Activated CD4-positive, alpha-beta memory T cell treated with anti-CD3 and anti-CD28 coated beads for 36 hours (primary cell): ENCODE measurements at regions of chr5 and their contacts with region 1.

Region 1: DNA sequence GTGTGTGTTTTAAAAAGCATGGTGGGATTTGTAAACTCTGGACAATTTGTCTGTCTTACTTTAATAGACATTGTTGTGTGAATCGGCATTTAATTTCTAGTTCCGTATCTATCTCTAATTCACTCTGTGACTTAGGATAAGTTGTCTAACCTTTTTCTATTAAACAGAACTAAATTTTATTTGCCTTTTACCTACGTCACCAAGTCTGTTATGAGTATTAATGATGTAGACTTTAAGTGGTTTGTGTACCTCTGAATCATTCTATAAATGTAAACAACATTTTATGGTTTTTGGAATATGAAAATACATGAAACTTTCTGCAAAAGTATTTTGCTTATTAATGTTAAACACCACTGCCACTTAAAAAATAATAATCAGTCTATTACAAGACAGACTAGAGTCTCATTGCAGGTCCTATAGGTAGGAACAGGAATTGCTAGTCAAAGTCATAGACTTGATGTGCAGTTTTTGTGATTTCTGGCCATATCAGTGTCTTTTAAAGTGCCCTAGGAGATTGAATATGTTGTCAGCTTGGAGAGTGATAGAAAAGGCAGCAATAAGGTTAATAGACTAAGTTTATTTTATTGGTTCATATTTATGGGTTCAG is 5.6 kb downstream of the RBM27 start:
- DNase-seq: no peak
- H3K4me3 Mint-ChIP-seq: no peak overlapping the region
- H3K27ac Mint-ChIP-seq: no peak overlapping the region
- H3K4me1 Mint-ChIP-seq: peaks cover 43% of the 10 kb centered on the region
- H3K27me3 Mint-ChIP-seq: no peaks in the 10 kb centered on the region

Region 2: GRCh38 chr5:146173597-146173996 is 35.4 kb before region 1 on chr5:
- CTCF ChIA-PET with region 1: no interaction called
- POLR2A ChIA-PET with region 1: no interaction called
- intact Hi-C with region 1: loop called (anchors 5 kb)
- DNase-seq: no peak
- H3K4me3 Mint-ChIP-seq: no peak overlapping the region
- H3K27ac Mint-ChIP-seq: no peak overlapping the region
- H3K4me1 Mint-ChIP-seq: peaks cover 10% of the 10 kb centered on the region
- H3K27me3 Mint-ChIP-seq: no peaks in the 10 kb centered on the region